H1 (cell line): ENCODE measurements at regions of chr11 and their contacts with region 1.

Region 1: GRCh38 chr11:65391007-65391406 is 4.6 kb downstream of the FRMD8 start:
- DNase-seq: no peak
- H3K4me3 ChIP-seq: no peak overlapping the region
- H3K27ac ChIP-seq: no peak overlapping the region
- H3K4me1 ChIP-seq: peaks cover 0 to 14% (median 5%) of the 10 kb centered on the region in 4 experiments; a peak in 5 of 7 replicates
- H3K27me3 ChIP-seq: 0 out of 7 replicates have a peak, but pooled peaks cover 0 to 2% (median 0%) of the 10 kb centered on the region in 4 experiments
- CTCF ChIP-seq: peak in 2 of 3 experiments; percentile 24 to 29; a peak in 2 of 4 replicates
- EP300 ChIP-seq: no peak
- POLR2A ChIP-seq: no peak
- RAD21 ChIP-seq: no peak

Region 2: DNA sequence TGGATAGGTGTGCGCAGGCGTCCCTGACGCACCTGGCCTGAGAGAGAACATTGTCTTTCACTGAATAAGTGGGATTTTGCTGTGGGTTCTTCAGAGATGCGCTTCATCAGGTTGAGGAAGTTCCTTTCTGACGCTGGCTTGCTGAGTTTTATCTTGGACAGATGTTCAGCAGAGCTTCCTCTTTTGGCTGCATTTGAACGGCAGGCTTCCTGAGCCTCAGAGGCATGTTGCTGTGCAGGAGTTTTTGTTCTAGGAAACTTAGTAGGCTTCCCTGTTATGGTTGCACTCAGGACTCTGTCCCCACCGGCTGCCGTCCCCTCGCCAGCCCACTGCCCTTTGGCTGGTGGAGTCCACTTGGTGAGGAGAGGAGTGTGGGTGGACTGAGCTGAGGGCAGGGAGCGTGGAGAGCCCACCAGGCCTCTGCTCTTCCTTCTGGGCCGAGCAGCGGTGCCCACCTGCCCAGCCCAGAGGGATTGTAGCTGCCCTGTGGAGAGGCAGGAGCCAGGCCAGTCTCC is 12.7 kb after region 1 on chr11:
- CTCF ChIA-PET with region 1: interaction called, 10 read pairs
- POLR2A ChIA-PET with region 1: interaction called, 23 read pairs
- DNase-seq: no peak
- H3K4me3 ChIP-seq: no peak overlapping the region
- H3K27ac ChIP-seq: no peak overlapping the region
- H3K4me1 ChIP-seq: no peaks in the 10 kb centered on the region; a peak in 1 of 7 replicates
- H3K27me3 ChIP-seq: no peaks in the 10 kb centered on the region
- CTCF ChIP-seq: no peak
- EP300 ChIP-seq: no peak
- POLR2A ChIP-seq: no peak
- RAD21 ChIP-seq: no peak

Region 3: DNA sequence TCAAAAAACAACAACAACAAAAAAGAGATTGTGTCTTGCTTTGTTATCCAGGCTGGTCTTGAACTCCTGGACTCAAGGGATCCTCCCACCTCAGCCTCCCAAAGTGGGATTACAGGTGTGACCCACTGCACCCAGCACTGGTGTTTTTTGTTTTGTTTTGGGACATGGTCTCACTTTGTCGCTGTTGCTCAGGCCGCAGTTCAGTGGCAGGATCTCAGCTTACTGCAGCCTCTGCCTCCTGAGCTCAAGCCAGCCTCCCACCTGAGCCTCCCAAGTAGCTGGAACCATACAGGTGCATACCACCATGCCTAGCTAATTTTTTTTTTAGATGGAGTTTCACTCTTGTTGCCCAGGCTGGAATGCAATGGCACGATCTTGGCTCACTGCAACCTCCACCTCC is 121.3 kb after region 1 on chr11:
- CTCF ChIA-PET with region 1: interaction called, 16 read pairs
- POLR2A ChIA-PET with region 1: interaction called, 202 read pairs
- DNase-seq: no peak
- H3K4me3 ChIP-seq: no peak overlapping the region
- H3K27ac ChIP-seq: no peak overlapping the region
- H3K4me1 ChIP-seq: no peaks in the 10 kb centered on the region
- H3K27me3 ChIP-seq: no peaks in the 10 kb centered on the region
- CTCF ChIP-seq: no peak
- EP300 ChIP-seq: no peak
- POLR2A ChIP-seq: no peak
- RAD21 ChIP-seq: no peak